GM10248 (cell line): ENCODE measurements at regions of chr1 and their contacts with region 1.

Region 1: DNA sequence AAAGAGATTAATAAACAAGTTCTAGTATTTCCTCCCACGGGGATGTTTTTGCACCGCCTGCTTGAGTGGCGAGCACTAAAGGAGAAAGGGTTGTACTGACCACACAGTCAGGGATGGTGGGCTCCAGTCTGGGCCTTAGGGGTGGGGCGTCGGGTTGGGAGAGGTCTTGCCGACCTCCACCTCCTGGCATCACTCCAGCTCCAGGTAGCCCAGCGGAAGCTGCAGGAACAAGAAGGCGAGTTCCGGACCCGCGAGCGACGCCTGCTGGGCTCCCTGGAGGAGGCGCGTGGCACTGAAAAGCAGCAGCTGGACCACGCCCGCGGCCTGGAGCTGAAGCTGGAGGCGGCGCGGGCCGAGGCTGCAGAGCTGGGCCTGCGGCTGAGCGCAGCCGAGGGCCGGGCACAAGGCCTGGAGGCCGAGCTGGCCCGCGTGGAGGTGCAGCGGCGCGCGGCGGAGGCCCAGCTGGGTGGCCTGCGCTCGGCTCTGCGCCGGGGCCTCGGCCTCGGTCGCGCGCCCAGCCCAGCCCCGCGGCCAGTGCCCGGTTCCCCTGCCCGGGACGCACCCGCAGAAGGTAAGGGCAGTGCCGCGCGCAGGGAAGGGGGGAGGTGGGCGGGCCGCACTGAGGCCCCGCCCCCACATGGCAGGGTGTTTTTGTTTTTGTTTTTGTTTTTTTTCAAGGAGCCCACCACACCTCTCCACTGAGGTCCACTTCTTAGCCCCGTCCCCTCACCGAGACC is 19.7 kb downstream of the MFAP2 start:
- DNase-seq: peak; percentile 79
- CTCF ChIP-seq: peak; percentile 84

Region 2: DNA sequence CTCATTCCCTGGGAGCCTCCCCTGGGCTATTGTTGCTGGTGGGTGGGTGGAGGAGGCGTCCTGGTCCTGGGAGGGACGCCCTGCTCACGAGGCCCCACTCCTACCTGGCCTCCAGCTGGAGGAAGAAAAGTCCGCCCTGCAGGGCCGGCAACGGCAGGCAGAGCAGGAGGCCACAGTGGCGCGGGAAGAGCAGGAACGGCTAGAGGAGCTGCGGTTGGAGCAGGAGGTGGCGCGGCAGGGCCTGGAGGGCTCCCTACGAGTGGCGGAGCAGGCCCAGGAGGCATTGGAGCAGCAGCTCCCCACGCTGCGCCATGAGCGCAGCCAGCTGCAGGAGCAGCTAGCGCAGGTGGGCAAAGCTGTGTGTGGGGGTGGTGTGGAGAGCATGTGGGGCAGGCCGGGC is 14.1 kb before region 1 on chr1:
- CTCF ChIA-PET with region 1: interaction called, 36 read pairs
- POLR2A ChIA-PET with region 1: no interaction called
- DNase-seq: no peak
- CTCF ChIP-seq: no peak

Region 3: DNA sequence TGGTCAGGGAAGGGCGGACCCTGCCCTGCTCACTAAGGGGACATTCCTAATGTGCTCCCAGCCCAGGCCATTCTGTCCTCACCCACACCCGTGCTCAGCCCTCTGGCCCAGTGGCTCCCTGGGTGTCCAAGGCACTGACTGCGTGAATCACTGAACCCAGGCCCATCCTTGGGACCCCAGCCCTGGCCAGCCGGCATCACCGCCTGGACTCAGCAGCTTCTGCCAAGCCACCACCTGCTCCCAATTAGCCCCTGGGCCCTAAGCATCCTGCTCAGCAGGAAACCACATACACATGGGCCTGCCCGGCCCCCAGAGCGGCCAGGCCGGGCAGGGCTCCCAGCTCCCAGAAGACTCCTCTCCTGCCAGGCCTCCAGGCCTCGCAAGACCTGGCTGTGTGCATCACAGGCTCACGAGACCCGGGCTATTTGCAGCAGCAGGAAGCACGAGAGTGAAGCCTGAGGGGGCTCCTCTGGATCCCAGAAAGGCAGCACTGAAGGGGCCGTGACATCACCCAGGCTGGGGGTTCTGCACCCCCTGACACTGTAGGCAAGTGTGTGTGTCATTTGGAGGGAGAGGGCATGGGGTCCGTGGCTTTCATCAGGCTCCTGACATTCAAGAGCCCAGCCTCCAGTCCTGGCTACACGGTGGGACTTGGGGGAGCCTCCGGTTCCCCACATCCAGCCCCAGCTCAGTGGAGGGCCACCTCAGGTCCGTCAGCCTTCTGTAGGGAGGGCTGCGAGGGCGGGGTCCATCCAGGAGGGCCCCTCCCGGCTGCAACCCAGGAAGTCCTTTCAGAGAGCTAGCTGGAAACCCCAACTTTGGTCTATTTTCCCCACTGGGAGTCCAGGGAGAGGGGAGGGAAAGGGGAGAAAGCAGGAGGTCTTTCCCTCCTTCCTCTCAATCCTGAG is 18.1 kb after region 1 on chr1:
- CTCF ChIA-PET with region 1: interaction called, 10 read pairs
- POLR2A ChIA-PET with region 1: no interaction called
- DNase-seq: no peak
- CTCF ChIP-seq: no peak

Region 4: GRCh38 chr1:17011439-17012307 is 50.9 kb after region 1 on chr1 and contains the start of gene ATP13A2:
- CTCF ChIA-PET with region 1: interaction called, 10 read pairs
- POLR2A ChIA-PET with region 1: no interaction called
- DNase-seq: peak; percentile 93
- CTCF ChIP-seq: no peak

Region 5: DNA sequence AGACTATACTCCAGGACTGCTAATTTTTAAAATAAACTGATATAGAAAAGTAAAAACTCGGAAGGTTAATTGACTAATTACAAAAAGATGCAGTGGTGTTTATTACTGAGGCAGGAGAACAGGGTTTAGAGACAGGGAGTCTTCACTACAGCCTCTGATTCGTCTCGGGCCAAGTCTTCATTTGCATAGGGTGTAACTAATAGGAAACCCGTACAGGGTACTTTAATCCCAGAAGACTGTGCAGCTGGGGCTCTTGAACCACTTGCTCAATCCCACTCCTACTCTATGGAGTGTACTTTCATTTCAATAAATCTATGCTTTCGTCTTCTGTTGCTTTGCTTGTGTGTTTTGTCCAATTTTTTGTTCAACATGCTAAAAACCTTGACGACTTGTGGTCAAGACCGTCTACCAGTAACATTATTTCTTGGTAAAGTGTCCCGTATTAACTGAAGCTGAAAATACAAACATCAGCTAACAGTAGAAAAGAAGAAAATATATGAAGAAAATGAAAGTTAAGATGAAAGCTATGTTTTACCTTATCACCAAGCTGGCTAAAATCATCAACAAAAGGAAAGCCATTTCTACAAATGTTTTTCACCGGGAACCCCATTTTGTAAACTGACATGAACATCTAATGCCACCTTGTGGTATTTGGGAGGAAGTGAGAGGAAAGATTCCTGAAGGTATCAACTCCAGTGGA is 85.1 kb after region 1 on chr1:
- CTCF ChIA-PET with region 1: interaction called, 21 read pairs
- POLR2A ChIA-PET with region 1: no interaction called
- DNase-seq: peak; percentile 49
- CTCF ChIP-seq: peak; percentile 56